ENCODE measurements at regions of chr6 and their contacts with region 1.

Region 1: DNA sequence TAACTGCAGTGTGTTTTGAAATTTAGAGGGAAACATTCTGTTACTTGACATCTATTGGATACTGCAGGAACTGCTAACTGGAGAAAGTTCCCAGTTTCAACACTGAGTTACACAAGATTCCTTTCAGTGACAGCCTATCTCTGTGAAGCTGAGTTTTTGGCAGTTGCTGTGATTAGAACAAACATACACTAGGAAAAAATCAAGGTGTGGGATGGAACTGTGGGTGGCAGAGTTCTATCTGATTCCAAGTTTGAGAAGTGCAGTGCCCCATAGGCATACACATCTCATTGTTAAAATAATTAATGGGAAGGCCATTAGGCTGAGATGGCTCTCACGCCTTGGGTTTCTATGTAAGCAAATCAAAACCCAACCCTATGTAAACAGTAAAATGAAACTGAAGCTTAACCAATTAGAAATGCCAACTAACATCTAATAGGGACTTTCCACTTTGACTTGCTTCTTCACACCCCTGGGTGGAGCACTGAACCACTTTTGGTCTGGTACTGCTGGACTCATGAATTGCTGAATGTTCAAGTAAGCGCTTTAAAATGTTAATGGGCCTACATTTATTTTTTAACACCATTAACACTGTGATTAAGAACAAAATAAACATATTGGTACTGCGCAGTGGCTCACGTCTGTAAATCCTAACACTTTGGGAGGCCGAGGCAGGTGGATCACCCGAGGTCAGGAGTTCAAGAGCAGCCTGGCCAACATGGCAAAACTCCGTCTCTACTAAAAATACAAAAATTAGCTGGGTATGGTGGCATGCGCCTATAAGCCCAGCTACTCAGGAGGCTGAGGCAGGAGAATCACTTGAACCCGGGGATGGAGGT is 55.2 kb upstream of the TBC1D7 start:
- DNase-seq: peak; percentile 23
- ATAC-seq: peak; percentile 78
- H3K4me3 ChIP-seq: no peak overlapping the region
- H3K27ac ChIP-seq: no peak overlapping the region
- H3K4me1 ChIP-seq: peaks cover 12% of the 10 kb centered on the region; the same call in 1 of the 2 replicates
- H3K27me3 ChIP-seq: no peaks in the 10 kb centered on the region
- CTCF ChIP-seq: peak; percentile 18; the same call in 1 of the 2 replicates

Region 2: GRCh38 chr6:13479206-13479800 is 95.8 kb after region 1 on chr6:
- CTCF ChIA-PET with region 1: no interaction called
- POLR2A ChIA-PET with region 1: interaction called, 20 read pairs
- intact Hi-C with region 1: no loop called
- DNase-seq: no peak
- ATAC-seq: no peak
- H3K4me3 ChIP-seq: no peak overlapping the region
- H3K27ac ChIP-seq: no peak overlapping the region
- H3K4me1 ChIP-seq: peaks cover 59% of the 10 kb centered on the region
- H3K27me3 ChIP-seq: no peaks in the 10 kb centered on the region
- CTCF ChIP-seq: no peak

Region 3: GRCh38 chr6:13538084-13538483 is 154.5 kb after region 1 on chr6:
- CTCF ChIA-PET with region 1: interaction called, 3 read pairs
- POLR2A ChIA-PET with region 1: no interaction called
- intact Hi-C with region 1: loop called (anchors 5 kb)
- DNase-seq: peak; percentile 70
- ATAC-seq: peak; percentile 66
- H3K4me3 ChIP-seq: no peak overlapping the region
- H3K27ac ChIP-seq: no peak overlapping the region
- H3K4me1 ChIP-seq: no peaks in the 10 kb centered on the region
- H3K27me3 ChIP-seq: no peaks in the 10 kb centered on the region
- CTCF ChIP-seq: peak; percentile 72